ENCODE measurements at regions of chr14 and their contacts with region 1.

Region 1: DNA sequence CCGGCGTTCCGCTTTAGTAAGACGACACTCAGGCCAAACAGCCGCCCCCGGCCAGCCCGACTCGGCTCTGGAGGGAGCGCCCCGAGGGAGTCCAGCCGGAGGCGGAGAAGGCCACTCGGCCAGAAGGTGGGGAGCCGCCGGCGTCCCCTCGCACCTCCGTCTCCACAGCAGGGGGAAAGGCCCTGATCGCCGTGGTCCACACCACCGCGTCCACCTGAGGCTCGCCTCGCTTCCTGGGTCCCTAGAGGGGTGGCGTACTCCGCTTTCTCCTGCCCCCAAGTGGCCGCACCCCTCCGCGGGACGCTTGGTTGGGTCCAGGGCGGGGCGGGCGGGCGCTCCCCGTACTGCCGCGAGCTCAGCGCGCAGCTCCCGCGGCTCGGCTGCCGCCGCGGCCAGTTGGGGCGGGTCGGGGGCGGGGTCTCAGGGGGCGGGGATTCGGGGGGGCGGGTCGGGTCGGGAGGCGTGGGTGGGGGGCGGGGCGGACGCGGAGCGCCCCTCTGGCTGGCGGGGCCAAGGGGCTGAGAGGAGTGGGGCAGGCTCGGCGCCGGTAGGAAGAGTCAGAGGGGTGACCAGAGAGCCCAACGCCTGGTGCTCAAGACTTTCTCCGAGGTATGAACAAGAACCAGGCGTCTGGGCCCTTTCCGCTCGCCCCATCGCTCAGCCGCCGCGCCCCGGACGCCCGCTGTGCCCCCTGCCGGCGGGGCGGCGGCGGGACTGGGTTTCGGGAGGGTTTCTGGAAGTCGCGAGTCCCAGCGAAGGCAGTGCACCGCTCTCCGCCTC is at the start of gene FRMD6:
- DNase-seq: peak; percentile 46 to 90 (median 80)

Region 2: GRCh38 chr14:51424561-51425251 is 226.9 kb before region 1 on chr14:
- intact Hi-C with region 1: no loop called
- DNase-seq: no peak

Region 3: GRCh38 chr14:51780006-51780692 is 128.6 kb after region 1 on chr14:
- intact Hi-C with region 1: loop called (anchors 5 kb)
- DNase-seq: peak; percentile 32 to 91 (median 76)

Measured in head of caudate nucleus (tissue), 42 donors.